ENCODE measurements at regions of chr1 and their contacts with region 1.

Region 1: GRCh38 chr1:183234660-183235476 is 48.8 kb downstream of the LAMC2 start:
- DNase-seq: peak; percentile 98
- H3K4me3 ChIP-seq: peak overlapping the region; percentile 13 to 77 (median 18)
- H3K27ac ChIP-seq: peak overlapping the region; percentile 81
- H3K4me1 ChIP-seq: peaks cover 30% of the 10 kb centered on the region
- H3K27me3 ChIP-seq: no peaks in the 10 kb centered on the region
- CTCF ChIP-seq: peak; percentile 69 to 71
- POLR2A ChIP-seq: no peak

Region 2: GRCh38 chr1:182910143-182910542 is 324.7 kb before region 1 on chr1:
- CTCF ChIA-PET with region 1: no interaction called
- POLR2A ChIA-PET with region 1: no interaction called
- dilution Hi-C with region 1: no loop called
- intact Hi-C with region 1: no loop called
- DNase-seq: no peak
- H3K4me3 ChIP-seq: no peak overlapping the region
- H3K27ac ChIP-seq: no peak overlapping the region
- H3K4me1 ChIP-seq: no peaks in the 10 kb centered on the region
- H3K27me3 ChIP-seq: peaks cover 0 to 2% of the 10 kb centered on the region in 2 experiments
- CTCF ChIP-seq: no peak
- POLR2A ChIP-seq: no peak

Region 3: DNA sequence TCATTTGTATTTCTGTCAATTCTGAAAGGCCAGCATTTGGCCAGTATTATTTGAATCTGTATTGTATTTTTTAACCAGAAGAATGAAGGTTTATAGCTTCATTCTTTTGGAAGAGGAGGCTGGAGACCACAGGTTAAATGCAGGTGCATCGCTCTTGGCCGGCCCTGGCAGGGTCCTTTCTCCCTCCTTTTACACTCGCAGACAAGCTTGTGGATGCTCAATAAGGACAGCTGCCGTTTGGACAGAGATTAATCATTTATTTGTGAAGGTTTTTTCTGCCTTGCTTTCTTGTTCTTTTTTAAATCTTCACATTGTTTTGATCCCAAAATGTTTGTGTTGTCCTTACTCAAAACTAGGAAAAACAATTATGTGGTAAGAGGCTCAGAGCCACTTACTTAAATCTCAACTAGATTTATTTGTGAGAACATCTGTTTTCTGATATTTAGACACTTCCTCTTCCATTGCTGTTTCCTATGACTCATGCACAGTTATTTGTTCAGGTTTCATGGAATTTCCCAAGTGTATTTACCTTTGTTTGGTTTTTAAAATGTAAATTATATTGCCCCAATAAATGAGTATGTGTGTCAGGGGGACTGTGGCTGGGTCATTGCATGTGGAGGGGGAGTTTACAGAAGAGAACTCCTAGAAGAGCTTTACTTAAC is 95.5 kb before region 1 on chr1:
- CTCF ChIA-PET with region 1: interaction called, 16 read pairs
- POLR2A ChIA-PET with region 1: no interaction called
- dilution Hi-C with region 1: no loop called
- intact Hi-C with region 1: loop called (anchors 1 kb)
- DNase-seq: peak; percentile 96
- H3K4me3 ChIP-seq: peak overlapping the region in 1 of 3 experiments; percentile 19
- H3K27ac ChIP-seq: peak overlapping the region; percentile 94
- H3K4me1 ChIP-seq: peaks cover 25% of the 10 kb centered on the region
- H3K27me3 ChIP-seq: no peaks in the 10 kb centered on the region
- CTCF ChIP-seq: no peak
- POLR2A ChIP-seq: peak; percentile 82

Region 4: DNA sequence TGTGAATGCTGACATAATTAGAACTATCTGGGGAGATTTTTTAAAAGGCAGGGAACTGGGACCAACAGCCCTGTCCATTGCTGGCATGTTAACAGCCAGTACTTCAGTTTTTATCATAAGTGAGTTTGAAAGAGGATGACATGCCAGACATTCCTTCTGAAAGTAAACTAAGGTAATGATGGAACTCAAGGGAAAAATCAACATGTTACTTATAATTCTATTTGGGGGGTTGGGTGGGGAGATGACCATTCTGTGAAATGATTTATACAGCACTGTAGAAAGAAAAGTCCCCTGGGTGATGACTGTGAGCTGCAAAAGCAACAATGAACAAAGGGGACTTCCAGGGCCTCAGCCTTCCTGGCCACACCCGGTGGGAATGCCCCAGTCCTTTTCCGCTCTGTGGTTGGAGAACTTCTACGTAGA is 54.2 kb before region 1 on chr1:
- CTCF ChIA-PET with region 1: interaction called, 8 read pairs
- POLR2A ChIA-PET with region 1: no interaction called
- dilution Hi-C with region 1: no loop called
- intact Hi-C with region 1: loop called (anchors 2 kb)
- DNase-seq: peak; percentile 86
- H3K4me3 ChIP-seq: no peak overlapping the region
- H3K27ac ChIP-seq: peak overlapping the region; percentile 90
- H3K4me1 ChIP-seq: peaks cover 16% of the 10 kb centered on the region
- H3K27me3 ChIP-seq: no peaks in the 10 kb centered on the region
- CTCF ChIP-seq: no peak
- POLR2A ChIP-seq: no peak

Region 5: DNA sequence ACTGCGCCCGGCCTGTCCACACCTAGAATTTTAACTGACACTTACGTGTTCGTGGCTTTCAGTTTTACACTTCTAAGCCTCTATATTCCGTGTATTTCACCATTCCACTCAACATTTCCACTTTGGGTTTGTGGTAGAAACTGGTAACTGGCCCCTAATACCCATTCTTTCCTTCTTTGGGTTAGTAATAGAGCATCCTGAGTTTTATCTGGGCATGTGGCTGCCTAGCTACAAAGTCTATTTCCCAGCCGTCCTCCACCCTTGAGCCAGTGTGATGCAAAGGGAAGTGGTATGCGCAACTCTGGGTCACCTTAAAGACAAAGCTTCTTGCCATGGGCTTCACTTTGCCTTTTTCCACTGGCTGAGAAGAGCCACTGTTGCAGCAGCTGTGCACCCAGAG is 25.0 kb after region 1 on chr1:
- CTCF ChIA-PET with region 1: interaction called, 20 read pairs
- POLR2A ChIA-PET with region 1: no interaction called
- dilution Hi-C with region 1: no loop called
- intact Hi-C with region 1: no loop called
- DNase-seq: no peak
- H3K4me3 ChIP-seq: no peak overlapping the region
- H3K27ac ChIP-seq: no peak overlapping the region
- H3K4me1 ChIP-seq: no peaks in the 10 kb centered on the region
- H3K27me3 ChIP-seq: peaks cover 0 to 6% of the 10 kb centered on the region in 2 experiments
- CTCF ChIP-seq: no peak
- POLR2A ChIP-seq: no peak

Region 6: DNA sequence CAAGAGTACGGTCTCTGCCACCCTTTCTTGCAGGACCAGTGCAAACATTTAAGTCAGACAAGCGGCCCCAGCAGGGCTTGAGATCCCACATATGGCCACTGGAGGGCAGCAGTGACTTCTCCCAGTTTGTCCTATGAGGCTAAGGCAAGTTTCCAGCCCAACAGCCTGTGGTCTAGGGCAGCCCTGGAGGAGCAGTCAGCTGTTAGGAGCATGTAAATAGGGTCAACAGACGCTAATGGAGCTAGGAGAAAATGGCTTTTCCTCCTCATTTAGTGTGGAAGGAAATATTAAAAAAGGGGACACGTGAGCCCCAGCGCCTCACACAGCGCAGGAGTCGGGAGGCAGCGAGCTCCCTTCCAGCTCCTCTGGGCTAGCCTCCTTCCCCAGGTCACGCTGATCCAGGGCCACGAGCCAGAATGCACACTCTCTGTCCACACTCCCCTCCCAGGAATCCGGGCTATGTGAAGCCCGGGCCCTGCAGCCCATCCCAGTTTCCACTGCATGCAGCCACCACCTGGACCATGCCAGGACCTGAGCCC is 46.8 kb after region 1 on chr1:
- CTCF ChIA-PET with region 1: interaction called, 8 read pairs
- POLR2A ChIA-PET with region 1: no interaction called
- dilution Hi-C with region 1: no loop called
- intact Hi-C with region 1: loop called (anchors 2 kb)
- DNase-seq: peak; percentile 92
- H3K4me3 ChIP-seq: no peak overlapping the region
- H3K27ac ChIP-seq: no peak overlapping the region
- H3K4me1 ChIP-seq: peaks cover 12% of the 10 kb centered on the region
- H3K27me3 ChIP-seq: no peaks in the 10 kb centered on the region
- CTCF ChIP-seq: peak; percentile 83 to 91
- POLR2A ChIP-seq: no peak

Measured in endothelial cell of umbilical vein (primary cell).